Activated T-helper 1 cell treated with anti-CD3 and anti-CD28 coated beads, Interleukin-12 subunit alpha, Interleukin-12 subunit beta, Interleukin-2, Interleukin-4 antibody, amounts not matched to agents 30 ng/mL and 10 ng/mL and 1 ng/mL, durations not matched to agents 14 hours and 24 hours and 36 hours (primary cell): ENCODE measurements at regions of chrX and their contacts with region 1.

Region 1: GRCh38 chrX:73943693-73944562 is 360.1 kb upstream of the ZCCHC13 start:
- DNase-seq: peak; percentile 78
- H3K4me3 Mint-ChIP-seq: peak overlapping the region; percentile 96
- H3K27ac Mint-ChIP-seq: peak overlapping the region; percentile 89
- H3K4me1 Mint-ChIP-seq: peaks cover 7% of the 10 kb centered on the region
- H3K27me3 Mint-ChIP-seq: no peaks in the 10 kb centered on the region

Region 2: GRCh38 chrX:73214426-73215094 is 729.4 kb before region 1 on chrX and contains the start of gene NAP1L2:
- intact Hi-C with region 1: loop called (anchors 10 kb)
- DNase-seq: peak; percentile 14
- H3K4me3 Mint-ChIP-seq: peak within 1 kb of the TSS; percentile 89
- H3K27ac Mint-ChIP-seq: peak within 1 kb of the TSS; percentile 59
- H3K4me1 Mint-ChIP-seq: peaks cover 10% of the 10 kb centered on the region
- H3K27me3 Mint-ChIP-seq: peaks cover 7% of the 10 kb centered on the region
- total RNA-seq, gene NAP1L2: 1.7 and 1.8 TPM in 2 replicates

Region 3: GRCh38 chrX:73562984-73563737 is 380.8 kb before region 1 on chrX and contains the start of gene CHIC1:
- intact Hi-C with region 1: loop called (anchors 2 kb)
- DNase-seq: peak; percentile 63
- H3K4me3 Mint-ChIP-seq: peak within 1 kb of the TSS; percentile 98
- H3K27ac Mint-ChIP-seq: peak within 1 kb of the TSS; percentile 99
- H3K4me1 Mint-ChIP-seq: peaks cover 24% of the 10 kb centered on the region
- H3K27me3 Mint-ChIP-seq: no peaks in the 10 kb centered on the region
- total RNA-seq, gene CHIC1: 5.2 and 6.9 TPM in 2 replicates

Region 4: DNA sequence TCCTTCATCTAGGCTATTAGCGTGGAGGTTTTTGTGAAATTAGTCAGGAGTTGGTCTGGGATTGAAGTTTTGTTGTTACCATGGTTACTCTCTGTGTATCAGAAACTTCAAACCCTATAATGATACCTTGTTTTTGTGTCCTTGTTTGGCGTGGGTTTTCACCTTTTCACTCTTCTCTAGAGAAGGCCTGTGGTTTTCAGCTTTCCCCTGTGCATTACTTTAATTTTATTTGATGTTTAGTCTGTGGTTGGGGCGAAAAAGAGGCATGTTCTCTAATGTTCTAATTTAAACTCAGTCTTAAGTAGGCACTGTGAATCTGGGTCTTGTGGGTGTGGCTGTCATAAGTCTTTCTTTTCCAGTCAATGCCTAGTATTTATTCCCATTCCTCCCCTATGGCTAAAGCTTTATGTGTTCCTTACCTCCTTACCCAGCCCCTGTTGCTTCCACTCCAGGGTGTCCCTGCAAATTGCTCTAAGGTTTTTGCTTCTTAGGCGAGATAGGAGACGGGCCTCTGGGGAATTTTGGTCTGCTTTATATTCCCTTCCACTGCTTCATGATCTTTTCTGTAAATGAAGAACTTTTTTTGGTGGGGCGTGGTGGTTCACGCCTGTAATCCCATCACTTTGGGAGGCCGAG is 33.7 kb after region 1 on chrX:
- intact Hi-C with region 1: loop called (anchors 1 kb)
- DNase-seq: no peak
- H3K4me3 Mint-ChIP-seq: no peak overlapping the region
- H3K27ac Mint-ChIP-seq: peak overlapping the region; percentile 86
- H3K4me1 Mint-ChIP-seq: peaks cover 15% of the 10 kb centered on the region
- H3K27me3 Mint-ChIP-seq: no peaks in the 10 kb centered on the region

Region 5: GRCh38 chrX:74015379-74016019 is 71.6 kb after region 1 on chrX:
- intact Hi-C with region 1: loop called (anchors 5 kb)
- DNase-seq: peak; percentile 28
- H3K4me3 Mint-ChIP-seq: no peak overlapping the region
- H3K27ac Mint-ChIP-seq: no peak overlapping the region
- H3K4me1 Mint-ChIP-seq: peaks cover 9% of the 10 kb centered on the region
- H3K27me3 Mint-ChIP-seq: no peaks in the 10 kb centered on the region